Calu3 (cell line): ENCODE measurements at regions of chr17 and their contacts with region 1.

Region 1: GRCh38 chr17:61419583-61419982 is 19.9 kb downstream of the TBX2 start:
- DNase-seq: no peak
- H3K4me3 Mint-ChIP-seq: no peak overlapping the region
- H3K27ac Mint-ChIP-seq: no peak overlapping the region
- H3K4me1 Mint-ChIP-seq: no peaks in the 10 kb centered on the region
- H3K27me3 Mint-ChIP-seq: peaks cover 44% of the 10 kb centered on the region
- CTCF ChIP-seq: no peak

Region 2: GRCh38 chr17:61325382-61326073 is 94.1 kb before region 1 on chr17:
- CTCF ChIA-PET with region 1: no interaction called
- intact Hi-C with region 1: no loop called
- DNase-seq: no peak
- H3K4me3 Mint-ChIP-seq: no peak overlapping the region
- H3K27ac Mint-ChIP-seq: no peak overlapping the region
- H3K4me1 Mint-ChIP-seq: no peaks in the 10 kb centered on the region
- H3K27me3 Mint-ChIP-seq: peaks cover 16% of the 10 kb centered on the region
- CTCF ChIP-seq: no peak

Region 3: GRCh38 chr17:61451538-61452300 is 32.1 kb after region 1 on chr17:
- CTCF ChIA-PET with region 1: no interaction called
- intact Hi-C with region 1: no loop called
- DNase-seq: no peak
- H3K4me3 Mint-ChIP-seq: peak overlapping the region; percentile 61
- H3K27ac Mint-ChIP-seq: no peak overlapping the region
- H3K4me1 Mint-ChIP-seq: no peaks in the 10 kb centered on the region
- H3K27me3 Mint-ChIP-seq: peaks cover 31% of the 10 kb centered on the region
- CTCF ChIP-seq: no peak

Region 4: DNA sequence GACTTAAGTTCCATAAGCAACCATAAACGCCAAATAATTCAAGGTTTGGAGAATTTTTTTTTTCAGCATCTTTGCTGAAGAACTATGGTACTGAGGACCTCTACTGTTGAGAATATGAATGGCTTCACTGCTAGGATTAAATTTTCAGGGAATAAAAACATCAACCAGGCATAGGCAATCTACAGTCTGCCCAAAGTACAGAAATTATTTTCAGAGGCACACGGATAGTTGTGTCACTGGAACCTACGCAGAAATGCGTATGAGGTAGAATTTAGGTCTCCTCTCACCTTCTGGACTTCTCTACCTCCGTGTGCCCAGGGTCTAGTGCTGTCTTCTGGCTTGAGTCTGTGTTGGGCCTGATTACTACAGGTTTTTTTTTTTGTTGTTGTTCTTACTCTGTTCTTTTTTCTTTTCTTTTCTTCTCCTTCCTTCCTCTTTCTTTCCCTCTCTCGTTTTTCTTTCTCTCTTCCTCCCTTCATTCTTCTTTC is 131.7 kb after region 1 on chr17:
- CTCF ChIA-PET with region 1: no interaction called
- intact Hi-C with region 1: loop called (anchors 2 kb)
- DNase-seq: no peak
- H3K4me3 Mint-ChIP-seq: no peak overlapping the region
- H3K27ac Mint-ChIP-seq: no peak overlapping the region
- H3K4me1 Mint-ChIP-seq: no peaks in the 10 kb centered on the region
- H3K27me3 Mint-ChIP-seq: no peaks in the 10 kb centered on the region
- CTCF ChIP-seq: peak; percentile 39

Region 5: GRCh38 chr17:61750656-61751055 is 331.1 kb after region 1 on chr17:
- CTCF ChIA-PET with region 1: no interaction called
- intact Hi-C with region 1: no loop called
- DNase-seq: no peak
- H3K4me3 Mint-ChIP-seq: no peak overlapping the region
- H3K27ac Mint-ChIP-seq: no peak overlapping the region
- H3K4me1 Mint-ChIP-seq: no peaks in the 10 kb centered on the region
- H3K27me3 Mint-ChIP-seq: no peaks in the 10 kb centered on the region
- CTCF ChIP-seq: no peak